Panc1 (cell line): ENCODE measurements at regions of chr1 and their contacts with region 1.

Region 1: GRCh38 chr1:84810343-84810742 is 82.7 kb downstream of the LPAR3 start:
- DNase-seq: no peak
- ATAC-seq: no peak
- H3K4me3 ChIP-seq: no peak overlapping the region
- H3K27ac ChIP-seq: no peak overlapping the region
- H3K4me1 ChIP-seq: no peaks in the 10 kb centered on the region
- H3K27me3 ChIP-seq: peaks cover 16% of the 10 kb centered on the region
- CTCF ChIP-seq: no peak

Region 2: DNA sequence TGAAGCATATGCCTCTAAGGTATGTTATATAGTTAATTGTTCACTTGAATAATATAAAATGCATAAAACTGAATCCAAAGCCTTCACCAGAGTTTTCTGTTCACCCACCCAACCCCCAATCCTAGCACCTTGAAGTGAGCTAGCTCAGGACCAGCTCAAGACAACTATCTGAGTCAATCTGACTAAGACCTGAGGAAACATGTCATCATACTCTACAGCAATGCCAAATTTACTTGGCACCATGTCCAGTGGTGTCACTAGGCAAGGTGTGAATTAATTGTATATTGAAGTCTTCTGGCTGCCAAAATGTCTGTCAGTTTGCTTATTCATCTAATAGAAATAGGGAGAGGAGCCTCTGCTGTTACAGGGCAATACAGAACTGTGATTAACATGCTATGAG is 408.3 kb before region 1 on chr1:
- CTCF ChIA-PET with region 1: no interaction called
- POLR2A ChIA-PET with region 1: no interaction called
- in situ Hi-C with region 1: no loop called
- intact Hi-C with region 1: no loop called
- DNase-seq: peak; percentile 30
- ATAC-seq: no peak
- H3K4me3 ChIP-seq: no peak overlapping the region
- H3K27ac ChIP-seq: no peak overlapping the region
- H3K4me1 ChIP-seq: no peaks in the 10 kb centered on the region
- H3K27me3 ChIP-seq: no peaks in the 10 kb centered on the region
- CTCF ChIP-seq: no peak

Region 3: DNA sequence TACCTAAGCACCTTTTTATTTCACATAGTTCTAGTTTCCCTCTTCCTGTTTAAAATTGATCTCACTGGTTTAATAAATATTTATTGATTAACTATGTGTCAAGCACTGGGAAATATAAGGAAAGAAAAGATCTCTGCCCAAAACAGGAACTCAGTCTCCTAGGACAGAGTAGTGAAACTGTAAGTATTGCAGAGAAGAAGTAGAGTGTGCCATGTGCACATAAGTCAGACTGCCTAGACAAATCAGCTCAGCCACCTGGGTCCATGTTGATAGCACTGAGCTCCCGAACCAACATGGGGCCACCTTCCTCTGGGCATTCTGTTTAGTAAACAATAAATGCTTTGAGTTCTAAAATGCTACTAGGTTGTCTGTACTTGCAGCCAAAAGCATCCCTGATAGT is 110.3 kb before region 1 on chr1:
- CTCF ChIA-PET with region 1: no interaction called
- POLR2A ChIA-PET with region 1: interaction called, 10 read pairs
- in situ Hi-C with region 1: no loop called
- intact Hi-C with region 1: no loop called
- DNase-seq: no peak
- ATAC-seq: no peak
- H3K4me3 ChIP-seq: no peak overlapping the region
- H3K27ac ChIP-seq: no peak overlapping the region
- H3K4me1 ChIP-seq: peaks cover 9% of the 10 kb centered on the region
- H3K27me3 ChIP-seq: peaks cover 29% of the 10 kb centered on the region; the same call in 1 of the 2 replicates
- CTCF ChIP-seq: no peak

Region 4: GRCh38 chr1:84889437-84889836 is 79.1 kb after region 1 on chr1:
- CTCF ChIA-PET with region 1: no interaction called
- POLR2A ChIA-PET with region 1: interaction called, 11 read pairs
- in situ Hi-C with region 1: no loop called
- intact Hi-C with region 1: no loop called
- DNase-seq: no peak
- ATAC-seq: no peak
- H3K4me3 ChIP-seq: no peak overlapping the region
- H3K27ac ChIP-seq: no peak overlapping the region
- H3K4me1 ChIP-seq: peaks cover 6% of the 10 kb centered on the region
- H3K27me3 ChIP-seq: peaks cover 16% of the 10 kb centered on the region
- CTCF ChIP-seq: no peak

Region 5: GRCh38 chr1:84918726-84919336 is 108.5 kb after region 1 on chr1:
- CTCF ChIA-PET with region 1: no interaction called
- POLR2A ChIA-PET with region 1: interaction called, 10 read pairs
- in situ Hi-C with region 1: no loop called
- intact Hi-C with region 1: no loop called
- DNase-seq: no peak
- ATAC-seq: no peak
- H3K4me3 ChIP-seq: no peak overlapping the region
- H3K27ac ChIP-seq: no peak overlapping the region
- H3K4me1 ChIP-seq: no peaks in the 10 kb centered on the region
- H3K27me3 ChIP-seq: no peaks in the 10 kb centered on the region; the same call in 1 of the 2 replicates
- CTCF ChIP-seq: no peak

Region 6: GRCh38 chr1:85027242-85027983 is 217.1 kb after region 1 on chr1:
- CTCF ChIA-PET with region 1: interaction called, 13 read pairs
- POLR2A ChIA-PET with region 1: no interaction called
- in situ Hi-C with region 1: no loop called
- intact Hi-C with region 1: no loop called
- DNase-seq: peak; percentile 24
- ATAC-seq: peak; percentile 93
- H3K4me3 ChIP-seq: no peak overlapping the region
- H3K27ac ChIP-seq: no peak overlapping the region
- H3K4me1 ChIP-seq: no peaks in the 10 kb centered on the region
- H3K27me3 ChIP-seq: no peaks in the 10 kb centered on the region
- CTCF ChIP-seq: peak; percentile 60

Region 7: DNA sequence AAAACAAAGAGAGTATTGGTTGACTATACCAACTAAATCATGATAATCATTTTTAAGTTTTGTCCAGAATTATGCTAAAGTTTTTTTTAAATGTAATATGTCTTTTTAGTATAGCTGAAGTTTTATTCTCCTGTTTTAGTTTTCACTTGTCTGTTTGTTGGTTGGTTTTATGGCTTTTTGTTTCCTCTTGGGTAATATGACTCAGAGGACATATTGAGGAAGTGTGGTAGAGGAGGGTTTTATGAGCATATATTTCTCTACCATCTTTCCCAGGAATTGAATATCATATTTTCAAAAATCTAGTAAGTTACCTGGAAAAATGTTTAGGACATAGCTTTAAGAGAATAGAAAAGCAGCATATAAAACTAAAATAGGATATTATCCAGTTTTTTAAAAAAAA is 306.5 kb after region 1 on chr1:
- CTCF ChIA-PET with region 1: no interaction called
- POLR2A ChIA-PET with region 1: no interaction called
- in situ Hi-C with region 1: no loop called
- intact Hi-C with region 1: no loop called
- DNase-seq: no peak
- ATAC-seq: no peak
- H3K4me3 ChIP-seq: no peak overlapping the region
- H3K27ac ChIP-seq: no peak overlapping the region
- H3K4me1 ChIP-seq: no peaks in the 10 kb centered on the region
- H3K27me3 ChIP-seq: no peaks in the 10 kb centered on the region; the same call in 1 of the 2 replicates
- CTCF ChIP-seq: no peak